ENCODE measurements at regions of chr12 and their contacts with region 1.

Region 1: DNA sequence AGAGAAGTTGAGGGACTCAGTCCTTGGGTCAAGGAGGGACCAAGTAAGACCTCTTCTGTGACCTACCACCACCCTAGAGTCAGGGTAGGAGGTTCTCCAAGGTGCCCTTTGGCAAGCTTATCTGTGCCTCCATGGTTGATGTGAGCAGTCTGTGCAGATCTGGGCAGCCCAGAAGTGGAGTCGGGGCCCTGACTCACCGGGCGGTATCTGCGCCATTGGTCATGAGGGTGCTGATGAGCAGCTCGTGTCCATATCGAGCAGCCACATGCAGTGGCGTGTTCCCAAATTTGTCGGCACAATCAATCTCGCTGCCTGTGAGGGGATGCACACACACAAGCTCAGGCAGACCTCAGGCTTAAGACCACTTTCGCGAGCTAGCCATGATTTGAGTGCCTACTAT is 5.1 kb downstream of the ANKRD52 start:
- DNase-seq: no peak
- ATAC-seq: no peak
- H3K4me3 ChIP-seq: no peak overlapping the region
- H3K27ac ChIP-seq: no peak overlapping the region
- H3K4me1 ChIP-seq: peaks cover 24% of the 10 kb centered on the region
- H3K27me3 ChIP-seq: no peaks in the 10 kb centered on the region
- CTCF ChIP-seq: no peak

Region 2: GRCh38 chr12:56593909-56594621 is 341.0 kb after region 1 on chr12:
- intact Hi-C with region 1: loop called in 1 of 2 experiments (anchors 5 kb)
- DNase-seq: peak; percentile 39 to 69
- ATAC-seq: peak; percentile 40 to 61 (median 55)
- H3K4me3 ChIP-seq: no peak overlapping the region
- H3K27ac ChIP-seq: peak overlapping the region; percentile 14
- H3K4me1 ChIP-seq: no peaks in the 10 kb centered on the region
- H3K27me3 ChIP-seq: no peaks in the 10 kb centered on the region
- CTCF ChIP-seq: peak; percentile 66

Measured in psoas muscle (tissue), 8 donors.